Posterior cingulate gyrus (tissue), 11 donors: ENCODE measurements at regions of chr6 and their contacts with region 1.

Region 1: GRCh38 chr6:19851241-19852089 is 14.3 kb downstream of the ID4 start:
- DNase-seq: peak in 4 of 10 donors; percentile 11 to 51 (median 22)

Region 2: DNA sequence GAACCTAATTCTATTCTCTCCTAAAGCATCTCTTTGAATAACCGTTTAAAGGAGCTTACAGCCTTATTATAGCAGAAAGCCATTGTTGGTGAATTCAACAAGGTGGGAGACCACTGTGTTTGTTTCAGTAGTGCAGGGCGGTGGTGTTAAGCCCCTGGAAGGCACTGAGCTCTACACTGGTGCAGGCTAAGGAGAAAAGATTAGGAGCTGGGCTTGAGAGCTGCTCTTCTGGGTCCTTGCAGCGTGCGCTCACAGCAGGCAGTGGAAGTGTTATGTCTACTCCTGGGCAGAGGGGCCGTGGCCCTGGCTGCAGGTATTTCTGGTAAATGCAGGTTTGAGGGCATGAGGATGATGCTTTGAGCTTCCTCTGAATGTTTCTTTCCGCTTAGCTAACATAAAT is 1103.2 kb before region 1 on chr6:
- intact Hi-C with region 1: loop called (anchors 5 kb)
- DNase-seq: peak in 1 of 10 donors; percentile 49

Region 3: DNA sequence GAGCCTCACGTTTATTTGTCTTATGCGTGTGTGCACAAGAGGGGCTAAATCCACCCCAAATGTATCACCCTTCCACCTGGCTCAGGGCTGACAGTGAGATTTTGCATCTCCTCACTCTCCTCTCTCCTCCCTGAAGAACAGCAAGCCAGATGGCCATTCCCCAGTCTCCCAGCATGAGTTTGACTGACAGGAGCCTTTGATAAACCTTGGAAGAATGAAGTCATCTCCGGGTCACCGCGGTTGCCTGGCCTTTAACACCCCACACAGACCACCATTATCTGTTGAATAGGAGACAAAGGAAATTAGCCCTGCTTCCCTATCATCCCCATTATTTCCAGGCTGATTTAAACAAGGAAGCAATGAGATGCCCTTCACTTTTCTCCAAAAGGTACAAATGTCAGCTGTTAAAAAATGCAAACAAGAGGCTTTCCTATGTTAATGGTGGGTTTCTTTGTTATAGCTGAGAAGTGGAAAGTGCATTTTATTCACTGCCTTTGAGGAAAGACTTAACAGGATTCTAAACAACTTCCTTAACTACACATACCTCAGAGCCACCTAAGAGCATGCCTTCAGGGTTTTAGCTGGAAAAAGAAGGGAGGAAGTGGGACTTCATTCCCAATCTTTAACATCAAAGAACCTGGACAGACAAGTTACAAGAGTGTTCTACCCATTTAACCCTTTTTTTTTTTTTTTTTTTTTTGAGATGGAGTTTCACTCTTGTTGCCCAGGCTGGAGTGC is 539.1 kb before region 1 on chr6:
- intact Hi-C with region 1: no loop called
- DNase-seq: no peak